Activated CD4-positive, alpha-beta memory T cell treated with anti-CD3 and anti-CD28 coated beads, Interleukin-2, amount 10 ng/mL, durations not matched to agents 7 days and 5 days (primary cell): ENCODE measurements at regions of chr15 and their contacts with region 1.

Region 1: DNA sequence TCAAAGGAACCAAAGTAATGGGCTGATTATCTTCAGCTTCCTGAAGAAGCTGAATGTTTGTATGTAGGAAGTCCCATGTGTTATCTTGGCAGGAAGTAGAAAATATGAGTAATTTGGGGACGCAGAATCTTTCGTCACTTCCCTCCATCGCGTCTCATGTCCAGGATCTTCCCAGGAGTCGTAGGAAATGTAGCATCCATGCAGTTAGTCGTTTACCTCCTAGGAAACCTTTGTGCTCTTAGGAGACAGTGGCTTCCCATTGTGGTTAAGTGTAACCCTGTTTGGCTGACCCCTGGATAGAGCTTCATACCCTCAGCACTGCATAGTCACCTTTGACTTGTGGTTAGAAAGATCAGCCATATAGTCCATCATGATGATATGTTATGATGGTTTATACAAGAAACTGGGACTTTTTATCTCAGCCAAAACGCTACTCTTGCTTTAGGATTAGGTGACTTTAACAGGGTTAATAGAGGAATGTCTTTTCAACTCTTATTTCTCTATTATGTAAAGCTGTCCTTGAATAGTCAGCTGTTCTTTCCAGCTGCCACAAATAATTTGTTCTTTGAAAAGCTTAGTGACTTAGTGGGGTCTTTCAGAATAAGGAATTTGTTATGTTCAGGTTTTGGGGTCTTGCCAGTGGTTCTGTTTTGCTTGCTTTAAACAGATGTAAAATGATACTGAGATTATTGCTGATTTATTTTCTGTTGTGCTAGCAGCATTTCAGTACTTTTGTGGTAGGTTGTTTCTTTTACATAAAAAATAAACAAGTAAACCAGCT is 92.2 kb downstream of the KLHL25 start:
- DNase-seq: peak; percentile 44
- H3K4me3 Mint-ChIP-seq: peak overlapping the region; percentile 69
- H3K27ac Mint-ChIP-seq: peak overlapping the region; percentile 88
- H3K4me1 Mint-ChIP-seq: peaks cover 60% of the 10 kb centered on the region
- H3K27me3 Mint-ChIP-seq: no peaks in the 10 kb centered on the region

Region 2: DNA sequence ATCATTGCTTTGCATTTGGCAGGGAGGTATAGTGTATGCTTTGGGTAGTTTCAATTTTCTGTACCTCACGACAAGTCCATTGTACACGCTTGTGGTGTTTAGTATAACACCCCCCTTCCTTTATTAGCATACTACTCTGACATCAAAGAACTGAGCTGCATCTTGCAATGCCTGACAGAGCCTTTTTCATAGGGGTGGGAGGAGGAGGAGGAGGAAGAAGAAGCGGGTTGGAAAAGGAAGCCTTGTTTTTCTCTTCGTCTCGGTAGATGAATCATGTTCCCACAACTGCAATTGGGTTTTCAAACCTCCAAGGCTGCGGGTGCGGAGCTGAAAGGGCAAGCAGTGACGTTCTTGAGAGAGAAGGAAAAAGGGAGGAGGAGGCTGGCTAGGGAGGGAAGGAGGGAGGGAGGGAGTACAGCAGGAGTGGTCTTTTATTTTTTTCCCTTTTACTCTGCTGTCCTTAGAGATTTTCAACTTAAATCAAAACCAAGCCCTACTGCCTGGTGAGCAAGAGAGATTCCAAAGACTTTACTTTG is 83.5 kb before region 1 on chr15:
- CTCF ChIA-PET with region 1: no interaction called
- POLR2A ChIA-PET with region 1: interaction called, 40 read pairs
- DNase-seq: peak; percentile 45
- H3K4me3 Mint-ChIP-seq: no peak overlapping the region
- H3K27ac Mint-ChIP-seq: no peak overlapping the region
- H3K4me1 Mint-ChIP-seq: peaks cover 26% of the 10 kb centered on the region
- H3K27me3 Mint-ChIP-seq: no peaks in the 10 kb centered on the region

Region 3: GRCh38 chr15:85625856-85626255 is 76.7 kb before region 1 on chr15:
- CTCF ChIA-PET with region 1: no interaction called
- POLR2A ChIA-PET with region 1: interaction called, 40 read pairs
- DNase-seq: peak; percentile 51
- H3K4me3 Mint-ChIP-seq: peak overlapping the region; percentile 51
- H3K27ac Mint-ChIP-seq: peak overlapping the region; percentile 90
- H3K4me1 Mint-ChIP-seq: peaks cover 74% of the 10 kb centered on the region
- H3K27me3 Mint-ChIP-seq: no peaks in the 10 kb centered on the region

Region 4: DNA sequence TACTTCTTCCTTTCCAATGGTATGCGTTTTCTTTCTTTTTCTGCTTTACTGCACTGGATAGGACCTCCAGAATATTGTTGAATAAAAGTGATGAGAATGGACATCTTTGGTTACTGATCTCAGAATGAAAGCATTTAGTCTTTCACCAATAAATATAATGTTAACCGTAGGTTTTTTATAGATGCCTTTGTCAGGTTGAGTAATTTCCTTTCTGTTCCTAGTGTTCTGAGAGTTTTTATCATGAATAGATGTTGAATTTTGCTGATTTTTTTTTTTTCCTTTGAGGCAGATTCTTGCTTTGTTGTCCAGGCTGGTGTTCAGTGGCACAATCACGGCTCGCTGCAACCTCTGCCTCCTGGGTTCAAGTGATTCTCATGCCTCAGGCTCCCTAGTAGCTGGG is 66.2 kb before region 1 on chr15:
- CTCF ChIA-PET with region 1: no interaction called
- POLR2A ChIA-PET with region 1: no interaction called
- DNase-seq: no peak
- H3K4me3 Mint-ChIP-seq: no peak overlapping the region
- H3K27ac Mint-ChIP-seq: no peak overlapping the region
- H3K4me1 Mint-ChIP-seq: peaks cover 30% of the 10 kb centered on the region
- H3K27me3 Mint-ChIP-seq: no peaks in the 10 kb centered on the region

Region 5: GRCh38 chr15:85646538-85647091 is 55.9 kb before region 1 on chr15:
- CTCF ChIA-PET with region 1: no interaction called
- POLR2A ChIA-PET with region 1: interaction called, 10 read pairs
- DNase-seq: peak; percentile 49
- H3K4me3 Mint-ChIP-seq: peak overlapping the region; percentile 17
- H3K27ac Mint-ChIP-seq: peak overlapping the region; percentile 80
- H3K4me1 Mint-ChIP-seq: peaks cover 53% of the 10 kb centered on the region
- H3K27me3 Mint-ChIP-seq: no peaks in the 10 kb centered on the region

Region 6: DNA sequence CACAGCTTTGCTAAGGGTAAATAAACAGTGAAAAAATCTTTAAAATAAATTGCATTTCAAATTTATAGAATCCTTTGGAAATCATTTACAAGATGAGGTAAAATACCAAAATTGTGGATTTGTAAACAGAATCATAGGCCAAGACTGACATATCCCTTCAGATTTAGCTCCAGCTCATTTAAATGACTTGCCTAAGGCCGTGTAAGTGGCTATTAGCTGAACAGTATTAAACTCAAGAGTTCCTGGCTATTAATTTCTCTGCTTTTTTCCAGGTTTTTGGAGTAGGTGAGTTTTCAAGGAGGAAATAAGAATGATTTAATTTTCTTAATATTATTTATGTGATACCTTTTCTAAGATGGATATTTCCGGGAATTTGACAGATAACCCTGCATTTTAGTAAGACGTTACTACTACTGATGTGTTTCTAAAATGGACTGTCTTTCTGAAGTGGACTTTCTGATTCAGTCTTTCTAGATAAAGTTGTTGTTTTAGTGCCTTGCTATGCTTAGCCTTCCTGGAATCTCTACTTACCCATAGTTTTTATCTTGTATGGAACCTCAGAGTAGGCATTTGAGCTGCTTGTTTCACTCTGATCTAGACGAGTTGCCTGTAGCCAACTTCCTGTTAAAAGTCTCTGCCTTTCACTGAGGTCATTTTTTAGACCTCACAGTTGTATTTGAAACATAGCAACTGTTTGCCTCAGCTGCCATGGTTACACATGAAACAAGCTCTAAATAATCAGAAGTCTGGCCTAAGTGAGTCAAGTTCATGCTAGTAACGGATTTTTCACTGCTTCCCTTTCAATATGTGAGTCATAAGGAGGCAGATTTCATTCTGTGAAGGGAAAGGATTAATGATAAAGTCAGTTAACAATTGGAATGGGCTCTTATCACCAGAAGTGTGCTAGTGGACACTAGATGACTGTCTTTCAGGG is 34.8 kb before region 1 on chr15:
- CTCF ChIA-PET with region 1: no interaction called
- POLR2A ChIA-PET with region 1: interaction called, 26 read pairs
- DNase-seq: peak; percentile 61
- H3K4me3 Mint-ChIP-seq: peak overlapping the region; percentile 2
- H3K27ac Mint-ChIP-seq: peak overlapping the region; percentile 86
- H3K4me1 Mint-ChIP-seq: peaks cover 22% of the 10 kb centered on the region
- H3K27me3 Mint-ChIP-seq: no peaks in the 10 kb centered on the region

Region 7: GRCh38 chr15:85800467-85801123 is 98.1 kb after region 1 on chr15:
- CTCF ChIA-PET with region 1: no interaction called
- POLR2A ChIA-PET with region 1: no interaction called
- DNase-seq: no peak
- H3K4me3 Mint-ChIP-seq: no peak overlapping the region
- H3K27ac Mint-ChIP-seq: no peak overlapping the region
- H3K4me1 Mint-ChIP-seq: peaks cover 5% of the 10 kb centered on the region
- H3K27me3 Mint-ChIP-seq: peaks cover 3% of the 10 kb centered on the region

Region 8: DNA sequence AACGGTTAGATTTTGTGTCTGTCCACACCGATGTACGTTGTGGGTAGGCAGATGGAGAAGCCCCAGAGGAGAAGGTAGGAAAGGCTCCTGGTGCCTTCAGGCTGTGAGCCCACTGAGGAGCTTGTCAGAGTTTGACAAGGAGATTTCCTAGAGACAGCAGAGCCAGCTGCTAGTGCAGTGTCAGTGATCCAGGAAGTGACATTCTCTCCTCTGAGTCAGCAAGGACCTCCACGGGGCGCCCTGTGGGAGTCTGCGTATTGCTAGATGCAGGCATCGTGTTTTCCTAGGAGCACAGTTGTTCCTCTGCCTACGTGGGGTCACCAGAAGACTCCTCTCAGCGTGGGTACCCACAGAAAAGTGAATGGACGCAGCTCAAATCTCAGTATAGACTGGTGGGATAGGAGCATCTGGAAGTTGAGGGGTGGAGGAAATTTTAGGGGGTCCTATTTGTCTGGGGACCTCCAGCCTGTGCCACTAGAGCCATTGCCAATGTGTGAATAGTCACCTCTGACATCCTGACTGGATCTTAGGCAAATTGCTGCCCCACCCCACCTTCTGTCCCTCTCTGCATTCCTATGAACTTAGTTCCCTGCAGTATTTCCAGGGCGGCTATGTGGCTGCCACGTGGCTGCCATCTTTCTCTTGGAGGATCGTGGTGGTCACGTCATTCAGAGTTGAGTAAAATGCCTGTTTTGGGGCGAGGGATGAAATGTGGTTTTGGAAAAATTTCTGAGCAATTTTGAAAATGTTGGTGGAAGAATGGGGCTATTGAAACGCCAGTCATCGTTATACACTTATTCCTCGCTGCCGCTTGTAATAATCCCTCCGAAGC is 177.0 kb after region 1 on chr15:
- CTCF ChIA-PET with region 1: no interaction called
- POLR2A ChIA-PET with region 1: no interaction called
- DNase-seq: no peak
- H3K4me3 Mint-ChIP-seq: no peak overlapping the region
- H3K27ac Mint-ChIP-seq: no peak overlapping the region
- H3K4me1 Mint-ChIP-seq: no peaks in the 10 kb centered on the region
- H3K27me3 Mint-ChIP-seq: peaks cover 23% of the 10 kb centered on the region